ENCODE measurements at regions of chr11 and their contacts with region 1.

Region 1: GRCh38 chr11:61187505-61188130 is 15.7 kb upstream of the PGA3 start:
- DNase-seq: peak; percentile 86
- H3K4me3 Mint-ChIP-seq: no peak overlapping the region
- H3K27ac Mint-ChIP-seq: no peak overlapping the region
- H3K4me1 Mint-ChIP-seq: peaks cover 2% of the 10 kb centered on the region
- H3K27me3 Mint-ChIP-seq: peaks cover 7% of the 10 kb centered on the region

Region 2: DNA sequence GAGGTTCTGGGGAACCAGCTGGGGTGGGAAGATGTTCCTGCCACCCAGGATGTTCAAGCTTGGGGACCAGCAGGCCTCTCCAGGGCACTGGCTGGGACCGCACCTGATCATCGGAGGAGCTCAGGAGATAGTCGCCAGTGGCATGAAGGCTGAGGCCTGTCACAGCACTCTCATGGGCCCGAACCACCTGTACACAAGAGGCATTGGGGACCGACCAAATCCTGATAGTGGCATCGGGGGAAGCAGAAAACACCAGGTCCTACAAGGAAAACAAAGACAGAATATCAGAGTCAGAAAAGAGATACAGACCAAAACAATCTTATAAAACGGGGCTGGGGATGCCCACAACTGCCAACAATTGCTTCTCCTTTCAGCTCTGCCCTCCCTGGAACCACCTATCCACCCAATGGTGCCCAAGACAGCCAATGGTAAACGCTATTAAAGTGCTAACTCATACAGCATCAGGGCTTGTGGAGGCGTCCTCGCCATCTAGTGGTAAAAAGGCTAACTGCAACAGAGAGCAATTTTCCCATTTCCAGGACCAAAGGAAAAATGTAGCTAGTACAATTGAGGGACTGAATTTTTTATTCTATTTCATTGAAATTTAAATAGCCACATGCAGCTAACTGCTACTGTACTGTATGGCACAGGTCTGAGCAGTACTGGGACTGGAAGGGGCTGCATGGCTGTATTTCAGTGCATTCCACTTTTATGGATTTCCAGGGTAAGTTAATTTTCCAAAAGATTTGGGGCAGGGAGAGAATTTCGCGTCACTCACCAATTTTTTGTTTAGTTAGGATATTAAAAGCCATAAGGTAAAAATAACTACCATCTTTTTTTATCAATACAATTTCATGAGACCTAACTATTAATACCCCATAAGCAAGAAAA is 288.3 kb before region 1 on chr11:
- CTCF ChIA-PET with region 1: interaction called, 11 read pairs
- DNase-seq: peak; percentile 45
- H3K4me3 Mint-ChIP-seq: no peak overlapping the region
- H3K27ac Mint-ChIP-seq: peak overlapping the region; percentile 15
- H3K4me1 Mint-ChIP-seq: peaks cover 7% of the 10 kb centered on the region
- H3K27me3 Mint-ChIP-seq: no peaks in the 10 kb centered on the region

Region 3: DNA sequence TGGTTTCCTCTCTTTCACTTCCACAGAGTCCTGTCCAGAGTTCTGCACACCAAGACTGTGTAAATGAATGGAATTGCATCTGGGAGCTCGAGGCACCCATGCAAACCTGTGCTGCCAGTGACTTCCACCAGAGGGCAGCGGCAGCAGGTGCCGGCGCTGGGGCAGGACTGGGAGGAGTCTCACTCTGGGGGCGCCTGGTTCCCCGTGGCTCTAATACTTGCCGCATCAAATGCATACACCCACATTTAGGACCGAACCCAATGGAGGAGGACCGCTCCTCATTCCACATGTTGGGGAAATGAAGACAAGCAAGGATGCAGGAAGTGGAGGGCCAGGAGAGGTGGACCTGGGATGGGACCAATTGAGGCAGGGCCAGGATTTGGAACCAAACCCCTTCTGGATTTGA is 217.2 kb before region 1 on chr11:
- CTCF ChIA-PET with region 1: interaction called, 16 read pairs
- DNase-seq: peak; percentile 88
- H3K4me3 Mint-ChIP-seq: peak overlapping the region; percentile 42
- H3K27ac Mint-ChIP-seq: peak overlapping the region; percentile 76
- H3K4me1 Mint-ChIP-seq: peaks cover 22% of the 10 kb centered on the region
- H3K27me3 Mint-ChIP-seq: peaks cover 13% of the 10 kb centered on the region

Region 4: DNA sequence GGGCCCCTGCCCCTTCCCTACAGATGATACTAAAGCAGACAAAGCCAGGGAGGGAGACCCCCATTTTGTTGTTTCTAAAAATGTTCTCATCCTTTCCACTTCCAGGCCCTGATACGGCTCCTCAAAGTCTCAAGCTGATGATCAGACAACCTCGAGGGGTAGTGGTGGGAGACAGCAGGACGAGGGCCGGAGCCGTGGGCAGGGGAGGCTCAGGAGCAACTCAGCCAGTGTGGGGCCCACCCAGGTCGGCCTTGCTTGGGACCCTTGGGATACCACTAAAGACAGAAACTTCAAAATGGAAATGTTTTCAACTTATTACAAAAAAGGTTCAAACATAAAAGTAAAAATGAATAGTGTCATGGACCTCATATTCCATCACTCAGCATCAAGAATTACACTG is 11.2 kb before region 1 on chr11:
- CTCF ChIA-PET with region 1: interaction called, 17 read pairs
- DNase-seq: no peak
- H3K4me3 Mint-ChIP-seq: no peak overlapping the region
- H3K27ac Mint-ChIP-seq: no peak overlapping the region
- H3K4me1 Mint-ChIP-seq: peaks cover 15% of the 10 kb centered on the region
- H3K27me3 Mint-ChIP-seq: peaks cover 54% of the 10 kb centered on the region

Region 5: DNA sequence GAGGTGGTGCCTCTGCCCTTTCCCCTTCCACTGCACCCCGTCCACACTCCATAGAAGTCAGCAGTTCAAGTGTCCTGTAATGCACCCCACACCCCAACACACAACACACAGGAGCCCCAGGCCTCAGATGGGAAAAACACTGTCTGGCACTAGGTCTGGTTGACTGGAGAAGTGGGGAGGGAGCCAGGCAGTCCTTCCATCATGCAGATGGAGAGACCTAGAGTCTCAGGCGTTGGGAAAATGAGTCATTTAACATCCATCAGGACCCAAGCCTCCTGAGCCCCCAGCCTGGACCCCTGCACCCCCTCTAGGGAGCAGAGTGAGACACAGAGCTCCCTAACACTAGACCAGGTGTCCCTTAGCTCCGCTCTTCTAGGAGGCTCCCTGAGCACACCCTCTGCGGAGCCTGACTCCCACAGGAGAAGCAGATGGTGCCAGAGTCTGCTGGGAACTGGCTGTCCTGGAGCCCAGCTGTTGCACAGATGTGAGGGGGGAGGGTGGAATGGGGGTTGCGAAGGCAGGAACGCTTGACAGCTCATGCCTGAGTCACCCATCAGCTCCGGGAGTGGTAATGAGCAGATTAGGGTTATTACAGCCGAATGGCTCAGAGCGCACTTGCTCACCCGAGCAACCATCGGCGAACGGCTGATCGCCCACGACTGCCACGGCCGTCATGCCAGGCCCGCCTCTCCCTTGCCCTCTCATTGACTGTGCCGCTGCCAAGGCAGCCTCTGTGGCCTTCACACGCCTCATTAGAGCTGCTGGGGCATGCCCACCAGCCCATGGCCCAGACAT is 415.4 kb after region 1 on chr11:
- CTCF ChIA-PET with region 1: no interaction called
- DNase-seq: no peak
- H3K4me3 Mint-ChIP-seq: no peak overlapping the region
- H3K27ac Mint-ChIP-seq: no peak overlapping the region
- H3K4me1 Mint-ChIP-seq: no peaks in the 10 kb centered on the region
- H3K27me3 Mint-ChIP-seq: peaks cover 43% of the 10 kb centered on the region